Mucosa of descending colon (tissue), 3 donors: ENCODE measurements at regions of chr3 and their contacts with region 1.

Region 1: DNA sequence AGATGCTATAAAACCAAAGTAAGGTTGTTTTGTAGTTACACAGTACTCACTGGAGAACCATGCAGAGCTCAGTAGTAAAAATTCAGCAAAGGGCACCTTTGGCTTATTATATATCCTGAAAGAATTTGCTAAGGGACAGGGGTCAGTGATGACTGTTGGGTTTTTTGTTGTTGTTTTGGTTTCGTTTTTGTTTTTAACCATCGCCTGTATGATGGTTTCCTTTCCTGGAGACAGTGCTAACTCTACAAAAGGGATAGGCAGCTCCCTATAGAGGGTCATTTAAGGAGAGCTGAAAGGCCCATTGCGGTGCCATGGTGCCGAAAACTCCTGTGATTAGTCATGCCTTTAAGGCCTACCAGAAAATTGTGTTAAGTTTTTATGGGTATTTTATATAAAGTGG is 118.2 kb upstream of the GOLIM4 start:
- DNase-seq: no peak
- ATAC-seq: no peak
- H3K4me3 ChIP-seq: no peak overlapping the region
- H3K4me1 ChIP-seq: no peaks in the 10 kb centered on the region
- CTCF ChIP-seq: no peak

Region 2: DNA sequence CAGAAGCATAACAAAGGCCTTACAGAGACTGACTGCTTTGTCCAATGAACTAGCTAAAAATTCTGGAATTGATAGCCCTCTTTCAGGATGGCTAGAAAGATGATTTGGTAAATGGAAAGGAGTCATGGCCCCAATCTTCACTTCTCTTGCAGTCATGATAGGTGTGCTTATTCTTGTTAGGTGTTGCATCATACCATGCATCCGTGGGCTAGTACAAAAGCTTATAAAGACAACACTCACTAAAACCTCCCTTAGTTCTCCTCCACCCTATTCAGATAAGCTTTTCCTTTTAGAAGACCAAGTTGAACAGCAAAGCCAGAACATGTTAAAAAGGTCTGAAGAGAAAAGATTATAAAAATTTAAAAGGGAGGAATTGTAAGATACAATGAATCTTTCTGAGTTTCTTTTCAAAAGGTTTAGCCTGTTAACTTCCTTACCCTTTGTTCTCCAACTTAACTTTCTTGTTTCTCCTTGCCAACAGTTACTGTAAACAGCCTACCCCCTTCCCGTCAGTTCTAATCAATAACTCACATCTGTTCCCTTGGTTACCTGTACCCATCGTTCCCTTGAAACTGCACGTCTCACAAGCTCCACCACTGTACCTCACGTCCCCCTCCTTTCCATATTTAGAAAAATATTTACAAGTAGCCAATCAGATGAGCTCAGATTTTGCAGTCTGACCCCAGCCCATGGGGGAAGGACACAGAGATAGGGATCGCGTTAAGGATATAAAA is 939.6 kb before region 1 on chr3:
- intact Hi-C with region 1: no loop called
- DNase-seq: no peak
- ATAC-seq: no peak
- H3K4me3 ChIP-seq: no peak overlapping the region
- H3K4me1 ChIP-seq: no peaks in the 10 kb centered on the region
- CTCF ChIP-seq: no peak

Region 3: DNA sequence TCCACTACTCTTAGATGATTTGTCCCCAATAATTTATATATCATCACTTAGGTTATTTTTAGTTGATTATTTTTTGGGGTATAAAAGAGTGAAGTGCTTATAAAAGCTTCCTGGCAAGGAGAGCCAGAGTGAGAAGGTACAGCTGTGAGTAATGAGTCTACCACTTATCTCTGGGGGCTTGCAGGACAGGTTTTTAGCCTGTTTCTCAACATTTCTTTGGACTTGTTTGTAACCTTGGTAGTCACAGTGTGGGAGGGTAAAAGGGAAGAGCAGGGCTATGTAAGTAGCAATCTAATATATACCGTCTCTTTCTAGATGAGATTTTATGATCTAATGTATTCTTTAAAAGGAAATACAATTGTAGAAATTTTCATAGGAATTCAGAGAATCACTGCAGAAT is 203.1 kb after region 1 on chr3:
- intact Hi-C with region 1: no loop called
- DNase-seq: no peak
- ATAC-seq: no peak
- H3K4me3 ChIP-seq: no peak overlapping the region
- H3K4me1 ChIP-seq: no peaks in the 10 kb centered on the region
- CTCF ChIP-seq: no peak

Region 4: DNA sequence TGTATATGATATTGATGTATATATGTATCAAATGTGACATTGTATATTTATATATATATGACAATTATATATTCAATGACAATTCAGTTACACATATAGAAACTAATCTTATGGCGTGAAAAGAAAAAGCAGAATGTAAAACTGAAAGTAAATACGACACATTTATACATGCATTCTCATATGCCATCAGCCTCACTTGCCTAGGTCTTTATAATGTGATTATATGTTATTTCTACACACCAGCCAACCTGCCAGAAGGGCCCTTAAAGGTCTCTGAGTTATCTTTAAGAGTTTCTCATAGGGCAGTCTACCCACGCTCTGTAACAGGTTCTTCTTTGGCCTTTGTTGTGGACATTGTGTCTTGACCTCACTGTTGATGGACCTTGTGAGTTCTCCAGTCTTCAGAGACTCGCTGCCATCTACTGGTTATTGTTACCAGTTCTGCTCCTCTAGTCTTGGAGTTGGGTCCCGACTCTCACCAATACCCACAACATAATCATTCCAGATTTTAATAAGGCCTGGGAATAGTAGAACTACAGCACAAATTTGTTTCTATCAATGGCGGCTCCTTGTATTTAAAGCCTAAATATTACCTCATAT is 253.3 kb after region 1 on chr3:
- intact Hi-C with region 1: loop called in 1 of 2 experiments (anchors 2 kb)
- DNase-seq: peak in 1 of 3 donors; percentile 50
- ATAC-seq: peak; percentile 49
- H3K4me3 ChIP-seq: no peak overlapping the region
- H3K4me1 ChIP-seq: no peaks in the 10 kb centered on the region
- CTCF ChIP-seq: no peak

Region 5: DNA sequence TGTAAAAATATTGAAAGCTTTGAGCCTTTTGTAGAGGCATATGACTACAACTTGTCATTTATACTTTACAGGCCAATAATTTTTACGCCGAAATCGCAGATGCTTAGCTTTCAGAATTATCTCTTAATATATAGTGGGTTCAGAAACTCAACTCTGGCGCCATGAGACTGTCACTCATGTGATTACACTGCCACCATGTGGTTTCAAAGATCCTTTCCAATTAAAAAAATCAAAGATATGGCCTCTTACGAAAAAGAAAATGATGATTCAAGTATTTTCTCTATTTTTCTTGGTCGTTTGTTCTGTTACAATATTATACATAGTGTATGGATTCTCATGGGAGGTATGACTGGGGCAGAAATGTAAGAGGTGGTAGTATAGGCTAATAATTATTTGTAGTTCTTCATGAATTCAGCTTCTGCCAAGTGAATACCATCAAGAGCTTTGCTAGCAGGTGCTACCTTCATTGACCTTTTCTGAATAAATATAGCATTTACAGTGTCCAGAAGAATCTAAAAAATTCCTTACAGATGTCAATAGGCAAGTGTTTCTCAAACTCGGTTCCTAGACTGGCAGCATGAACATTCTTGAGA is 633.5 kb after region 1 on chr3:
- intact Hi-C with region 1: loop called (anchors 5 to 10 kb)
- DNase-seq: peak in 1 of 3 donors; percentile 46
- ATAC-seq: no peak
- H3K4me3 ChIP-seq: no peak overlapping the region
- H3K4me1 ChIP-seq: no peaks in the 10 kb centered on the region
- CTCF ChIP-seq: peak; percentile 17